KBM-7 (cell line): ENCODE measurements at regions of chr7 and their contacts with region 1.

Region 1: GRCh38 chr7:47846117-47846836 is 102.0 kb downstream of the PKD1L1 start:
- DNase-seq: no peak

Region 2: GRCh38 chr7:47254081-47255006 is 591.9 kb before region 1 on chr7:
- in situ Hi-C with region 1: loop called (anchors 25 kb)
- DNase-seq: peak; percentile 79